T-cell (primary cell): ENCODE measurements at regions of chr17 and their contacts with region 1.

Region 1: DNA sequence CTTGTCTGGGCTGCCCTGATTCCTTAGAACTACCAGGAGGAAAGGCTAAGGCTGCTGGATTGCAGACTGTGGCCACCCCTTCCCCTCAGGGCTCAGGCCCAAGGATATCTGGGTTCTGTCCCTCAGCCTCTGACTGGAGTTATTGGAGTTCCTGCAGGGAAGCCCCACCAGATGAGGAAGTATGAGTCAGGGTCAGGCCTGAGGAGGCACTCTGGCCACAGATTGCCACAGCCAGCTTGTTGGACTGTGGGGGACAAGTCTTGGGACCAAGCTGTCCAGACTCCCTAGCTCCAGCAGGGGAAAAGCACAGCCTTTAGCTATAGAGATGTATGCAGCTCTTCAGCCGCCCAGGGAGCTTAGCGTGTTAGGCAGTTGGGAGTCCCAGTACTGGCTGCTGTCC is 381.9 kb upstream of the TOM1L1 start:
- DNase-seq: no peak
- ATAC-seq: no peak
- H3K4me3 ChIP-seq: no peak overlapping the region
- H3K4me3 Mint-ChIP-seq: no peak overlapping the region
- H3K27ac ChIP-seq: no peak overlapping the region
- H3K27ac Mint-ChIP-seq: no peak overlapping the region
- H3K4me1 ChIP-seq: no peaks in the 10 kb centered on the region
- H3K4me1 Mint-ChIP-seq: no peaks in the 10 kb centered on the region
- H3K27me3 ChIP-seq: no peaks in the 10 kb centered on the region
- H3K27me3 Mint-ChIP-seq: no peaks in the 10 kb centered on the region

Region 2: GRCh38 chr17:54623746-54624145 is 105.0 kb after region 1 on chr17:
- CTCF ChIA-PET with region 1: no interaction called
- POLR2A ChIA-PET with region 1: interaction called in 1 of 2 experiments, 11 read pairs
- DNase-seq: no peak
- ATAC-seq: no peak
- H3K4me3 ChIP-seq: no peak overlapping the region
- H3K4me3 Mint-ChIP-seq: no peak overlapping the region
- H3K27ac ChIP-seq: no peak overlapping the region
- H3K27ac Mint-ChIP-seq: no peak overlapping the region
- H3K4me1 ChIP-seq: no peaks in the 10 kb centered on the region
- H3K4me1 Mint-ChIP-seq: no peaks in the 10 kb centered on the region
- H3K27me3 ChIP-seq: no peaks in the 10 kb centered on the region
- H3K27me3 Mint-ChIP-seq: no peaks in the 10 kb centered on the region